HEK293T (cell line): ENCODE measurements at regions of chr1 and their contacts with region 1.

Region 1: DNA sequence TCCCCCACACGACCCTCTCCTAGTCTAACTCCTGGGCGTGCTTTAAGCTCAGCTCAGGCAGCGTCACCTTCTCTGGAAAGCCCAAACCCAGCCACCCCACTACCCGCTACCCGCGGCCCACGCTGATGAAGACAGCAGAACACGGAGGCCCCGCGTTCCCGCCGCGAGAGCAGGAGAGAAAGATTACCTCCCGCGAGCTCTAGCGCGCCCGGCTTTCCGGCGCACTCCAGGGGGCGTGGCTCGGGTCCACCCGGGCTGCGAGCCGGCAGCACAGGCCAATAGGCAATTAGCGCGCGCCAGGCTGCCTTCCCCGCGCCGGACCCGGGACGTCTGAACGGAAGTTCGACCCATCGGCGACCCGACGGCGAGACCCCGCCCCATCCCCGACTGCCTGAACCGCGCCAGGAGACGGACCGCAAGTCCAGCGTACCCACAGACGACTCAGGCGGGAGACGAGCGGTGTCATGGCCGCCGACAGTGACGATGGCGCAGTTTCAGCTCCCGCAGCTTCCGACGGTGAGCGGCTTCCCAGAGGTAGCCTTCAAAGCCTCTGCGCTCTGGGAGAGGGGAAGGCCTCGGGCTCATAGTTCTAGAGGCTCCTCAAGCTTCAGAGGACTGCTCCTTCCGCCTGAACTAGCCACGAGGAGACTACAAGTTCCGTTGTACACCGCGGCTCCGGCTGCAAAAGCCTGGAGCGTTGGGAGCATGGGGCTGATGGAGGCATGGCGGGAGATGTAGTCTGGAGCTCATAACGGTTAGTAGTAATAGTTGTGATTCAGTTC is at the starts of genes MUTYH and TOE1:
- DNase-seq: peak; percentile 94

Region 2: GRCh38 chr1:45321444-45321843 is 18.5 kb before region 1 on chr1:
- CTCF ChIA-PET with region 1: no interaction called
- POLR2A ChIA-PET with region 1: interaction called, 61 read pairs
- DNase-seq: no peak

Region 3: DNA sequence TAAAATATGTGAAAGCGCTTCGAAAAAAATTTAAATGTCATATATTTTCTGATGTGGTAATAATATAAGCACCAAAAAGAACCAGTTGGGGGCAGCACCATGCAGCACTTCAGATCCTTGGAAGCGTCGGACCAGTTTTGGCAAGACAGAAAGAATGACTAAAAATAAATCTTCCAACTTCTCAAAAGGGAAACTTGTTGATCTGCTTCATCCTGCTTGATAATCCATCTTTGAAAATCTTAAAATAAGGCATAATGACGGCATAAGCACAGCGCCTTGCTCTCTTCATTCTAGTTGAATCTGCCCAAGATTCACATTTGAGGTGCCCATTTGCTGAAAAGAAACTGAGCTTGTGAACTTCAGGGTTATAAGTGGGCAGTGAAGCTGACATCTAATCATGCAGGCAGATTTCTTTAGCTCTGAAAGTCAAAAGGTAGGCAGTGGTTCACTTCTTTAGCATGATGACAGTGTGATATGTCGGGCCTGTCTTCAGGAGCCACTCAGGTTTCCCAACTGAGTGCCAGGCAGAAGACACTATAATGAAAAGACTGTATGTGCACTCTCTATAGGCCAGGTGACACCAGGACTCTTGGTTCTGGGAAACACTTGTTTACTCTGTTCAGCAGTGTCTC is 20.0 kb after region 1 on chr1:
- CTCF ChIA-PET with region 1: interaction called, 5 read pairs
- POLR2A ChIA-PET with region 1: interaction called, 37 read pairs
- DNase-seq: peak; percentile 53

Region 4: GRCh38 chr1:45499415-45499769 is 159.4 kb after region 1 on chr1:
- CTCF ChIA-PET with region 1: no interaction called
- POLR2A ChIA-PET with region 1: interaction called, 29 read pairs
- DNase-seq: no peak